HEK293T (cell line): ENCODE measurements at regions of chr12 and their contacts with region 1.

Region 1: DNA sequence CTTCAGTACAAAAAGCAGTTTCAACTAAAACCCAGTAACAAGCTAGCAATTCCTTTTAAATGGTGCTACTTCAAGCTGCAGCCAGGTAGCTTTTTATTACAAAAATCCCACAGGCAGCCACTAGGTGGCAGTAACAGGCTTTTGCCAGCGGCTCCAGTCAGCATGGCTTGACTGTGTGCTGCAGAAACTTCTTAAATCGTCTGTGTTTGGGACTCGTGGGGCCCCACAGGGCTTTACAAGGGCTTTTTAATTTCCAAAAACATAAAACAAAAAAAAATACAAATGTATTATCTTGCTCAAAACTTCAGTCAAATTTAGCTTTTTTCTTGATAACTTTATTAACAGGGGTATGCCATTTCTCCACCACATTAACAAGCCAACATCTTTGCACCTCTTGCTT is 3.6 kb upstream of the CLEC4E start:
- DNase-seq: peak; percentile 69

Region 2: GRCh38 chr12:8572507-8572906 is 28.2 kb after region 1 on chr12:
- CTCF ChIA-PET with region 1: interaction called, 11 read pairs
- POLR2A ChIA-PET with region 1: no interaction called
- DNase-seq: no peak

Region 3: DNA sequence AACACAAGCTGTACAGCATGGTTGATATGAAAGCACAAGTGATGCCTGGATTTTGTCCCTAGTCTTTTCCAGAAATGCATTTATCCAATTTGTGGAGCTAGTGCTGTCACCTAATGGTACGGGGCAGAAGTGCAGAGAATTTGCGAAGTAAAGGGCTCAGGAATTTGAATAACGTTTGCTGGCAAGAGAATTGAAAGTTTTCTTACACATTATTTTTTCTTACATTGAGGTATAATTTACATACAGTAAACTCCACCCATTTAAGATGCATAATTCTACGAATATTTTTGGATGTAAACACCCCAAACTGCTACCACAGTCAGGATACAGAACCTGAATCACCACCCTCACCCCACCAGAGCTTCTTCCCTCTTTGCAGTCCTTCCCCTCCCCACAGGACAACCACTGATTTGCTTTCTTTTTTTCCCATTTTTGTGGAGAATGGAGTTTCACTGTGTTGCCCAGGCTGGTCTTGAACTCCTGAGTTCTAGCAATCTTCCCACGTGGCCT is 64.8 kb after region 1 on chr12:
- CTCF ChIA-PET with region 1: interaction called, 39 read pairs
- POLR2A ChIA-PET with region 1: interaction called, 3 read pairs
- DNase-seq: peak; percentile 64